Activated CD8-positive, alpha-beta T cell treated with anti-CD3 and anti-CD28 coated beads for 36 hours (primary cell): ENCODE measurements at regions of chr16 and their contacts with region 1.

Region 1: DNA sequence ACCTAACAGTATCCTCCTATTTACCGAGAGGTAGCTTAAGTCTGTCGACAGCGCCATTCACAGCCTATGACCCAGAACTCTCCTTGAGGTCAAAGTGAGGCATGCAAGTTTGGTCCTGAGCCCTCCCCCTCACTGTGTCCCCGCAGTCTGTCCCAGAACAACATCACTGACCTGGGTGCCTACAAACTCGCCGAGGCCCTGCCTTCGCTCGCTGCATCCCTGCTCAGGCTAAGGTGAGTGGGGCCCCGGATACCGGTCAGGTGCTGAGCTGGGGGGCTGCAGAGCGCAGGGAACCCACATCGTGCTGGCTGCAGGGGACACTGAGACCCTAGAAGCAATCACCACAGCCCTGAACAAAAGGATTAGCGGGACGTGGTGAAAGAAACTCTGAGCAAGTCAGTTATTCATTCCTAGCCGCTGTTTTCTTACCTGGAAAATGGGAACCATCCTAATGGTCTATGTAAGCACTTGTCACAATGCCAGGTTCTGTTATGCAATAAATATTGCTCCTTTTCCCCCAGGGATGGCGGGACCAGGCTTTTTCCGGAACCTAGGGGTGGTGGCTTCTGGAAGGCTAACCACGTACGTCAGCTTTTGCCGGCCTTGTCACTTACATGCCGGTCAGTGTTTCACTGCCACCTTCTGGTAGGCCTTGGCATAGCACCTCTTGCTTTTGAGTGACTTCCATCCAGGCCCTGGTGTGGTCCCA is 23.8 kb downstream of the DEXI start:
- DNase-seq: peak; percentile 96
- ATAC-seq: peak; percentile 87
- H3K4me3 Mint-ChIP-seq: no peak overlapping the region
- H3K27ac Mint-ChIP-seq: no peak overlapping the region
- H3K4me1 Mint-ChIP-seq: peaks cover 10% of the 10 kb centered on the region
- H3K27me3 Mint-ChIP-seq: no peaks in the 10 kb centered on the region
- CTCF ChIP-seq: peak; percentile 90

Region 2: GRCh38 chr16:10509534-10510025 is 408.9 kb before region 1 on chr16:
- CTCF ChIA-PET with region 1: interaction called, 19 read pairs
- POLR2A ChIA-PET with region 1: interaction called, 3 read pairs
- intact Hi-C with region 1: no loop called
- DNase-seq: peak; percentile 61
- ATAC-seq: peak; percentile 91
- H3K4me3 Mint-ChIP-seq: no peak overlapping the region
- H3K27ac Mint-ChIP-seq: no peak overlapping the region
- H3K4me1 Mint-ChIP-seq: peaks cover 14% of the 10 kb centered on the region
- H3K27me3 Mint-ChIP-seq: peaks cover 2% of the 10 kb centered on the region
- CTCF ChIP-seq: peak; percentile 83

Region 3: DNA sequence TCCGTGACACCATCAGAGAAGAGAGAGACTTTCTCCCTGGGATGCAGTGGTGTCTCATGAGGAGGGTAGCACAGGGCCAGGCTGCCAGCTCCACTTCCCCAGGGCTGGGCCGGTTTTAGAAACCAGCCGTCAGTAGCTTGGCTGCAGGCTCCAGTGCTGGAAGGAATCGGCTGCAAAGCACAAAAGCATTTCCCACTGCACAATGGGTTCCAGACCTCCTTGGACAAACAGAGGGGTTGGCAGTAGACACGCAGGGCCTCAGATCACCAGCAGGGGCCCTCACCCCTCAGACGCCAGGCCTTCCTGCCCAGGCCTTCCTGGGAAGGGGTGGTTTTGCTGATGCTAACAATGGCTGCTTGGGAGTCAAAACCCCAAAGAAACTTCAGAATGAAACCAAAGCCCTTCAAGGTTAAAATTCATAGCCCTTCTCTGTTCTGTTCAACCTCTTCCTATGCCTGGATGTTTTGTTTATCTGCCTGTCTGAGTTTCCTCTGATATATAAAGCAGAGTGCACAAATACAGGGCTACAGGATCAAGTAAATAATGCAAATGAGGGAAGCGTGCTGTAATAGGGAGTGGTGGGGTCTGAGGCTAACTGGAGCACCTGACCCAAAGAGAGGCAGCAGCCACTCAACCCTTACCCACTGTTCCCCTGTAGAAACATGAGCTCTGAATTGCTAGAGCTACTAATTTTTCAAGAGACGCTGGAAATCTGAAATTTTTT is 250.0 kb before region 1 on chr16:
- CTCF ChIA-PET with region 1: interaction called, 12 read pairs
- POLR2A ChIA-PET with region 1: no interaction called
- intact Hi-C with region 1: no loop called
- DNase-seq: peak; percentile 19
- ATAC-seq: no peak
- H3K4me3 Mint-ChIP-seq: no peak overlapping the region
- H3K27ac Mint-ChIP-seq: no peak overlapping the region
- H3K4me1 Mint-ChIP-seq: no peaks in the 10 kb centered on the region
- H3K27me3 Mint-ChIP-seq: no peaks in the 10 kb centered on the region
- CTCF ChIP-seq: peak; percentile 60

Region 4: GRCh38 chr16:10743610-10744393 is 174.6 kb before region 1 on chr16 and contains the start of gene NUBP1:
- CTCF ChIA-PET with region 1: interaction called, 20 read pairs
- POLR2A ChIA-PET with region 1: no interaction called
- intact Hi-C with region 1: loop called (anchors 5 kb)
- DNase-seq: peak; percentile 100
- ATAC-seq: peak; percentile 96
- H3K4me3 Mint-ChIP-seq: peak within 1 kb of the TSS; percentile 76
- H3K27ac Mint-ChIP-seq: peak within 1 kb of the TSS; percentile 98
- H3K4me1 Mint-ChIP-seq: peaks cover 33% of the 10 kb centered on the region
- H3K27me3 Mint-ChIP-seq: no peaks in the 10 kb centered on the region
- CTCF ChIP-seq: no peak
- total RNA-seq, gene NUBP1: 22.8 to 23.1 TPM

Region 5: DNA sequence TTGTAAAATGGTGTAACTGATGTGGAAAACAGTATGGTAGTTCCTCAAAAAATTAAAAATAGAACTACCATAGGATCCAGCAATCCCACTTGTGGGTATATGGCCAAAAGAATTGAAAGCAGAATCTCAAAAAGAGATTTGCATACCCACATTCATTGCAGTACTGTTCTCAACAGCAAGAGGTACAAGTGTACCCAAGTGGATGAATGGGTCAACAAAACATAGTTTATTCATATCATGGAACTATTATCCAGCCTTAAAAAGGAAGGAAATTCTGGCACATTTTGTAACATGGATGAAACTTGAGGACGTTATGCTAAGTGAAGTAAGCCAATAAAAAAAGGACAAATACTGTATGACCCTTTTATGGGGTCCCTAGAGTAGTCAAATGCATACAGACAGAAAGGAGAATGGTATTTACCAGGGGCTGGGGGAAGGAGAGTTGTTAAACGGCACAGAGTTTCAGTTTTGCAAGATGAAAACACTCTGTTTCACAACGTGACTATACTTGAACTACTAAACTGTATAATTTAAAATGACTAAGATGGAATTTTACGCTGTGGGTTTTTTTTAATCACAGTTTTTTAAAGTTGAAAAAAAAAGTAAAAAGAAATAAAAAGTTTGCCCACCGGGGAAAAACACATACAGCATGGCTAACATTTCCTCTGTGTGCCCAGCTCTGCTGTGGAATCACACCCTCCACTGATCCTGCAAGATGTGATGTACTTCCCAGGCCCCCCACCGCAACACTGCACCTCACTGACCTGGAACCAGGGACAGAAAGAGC is 105.9 kb before region 1 on chr16:
- CTCF ChIA-PET with region 1: no interaction called
- POLR2A ChIA-PET with region 1: no interaction called
- intact Hi-C with region 1: loop called (anchors 10 kb)
- DNase-seq: peak; percentile 13
- ATAC-seq: peak; percentile 92
- H3K4me3 Mint-ChIP-seq: no peak overlapping the region
- H3K27ac Mint-ChIP-seq: peak overlapping the region; percentile 7
- H3K4me1 Mint-ChIP-seq: peaks cover 9% of the 10 kb centered on the region
- H3K27me3 Mint-ChIP-seq: peaks cover under 1% of the 10 kb centered on the region
- CTCF ChIP-seq: no peak

Region 6: GRCh38 chr16:10851512-10851911 is 66.9 kb before region 1 on chr16:
- CTCF ChIA-PET with region 1: no interaction called
- POLR2A ChIA-PET with region 1: no interaction called
- intact Hi-C with region 1: no loop called
- DNase-seq: no peak
- ATAC-seq: no peak
- H3K4me3 Mint-ChIP-seq: no peak overlapping the region
- H3K27ac Mint-ChIP-seq: no peak overlapping the region
- H3K4me1 Mint-ChIP-seq: peaks cover 11% of the 10 kb centered on the region
- H3K27me3 Mint-ChIP-seq: peaks cover 8% of the 10 kb centered on the region
- CTCF ChIP-seq: no peak

Region 7: DNA sequence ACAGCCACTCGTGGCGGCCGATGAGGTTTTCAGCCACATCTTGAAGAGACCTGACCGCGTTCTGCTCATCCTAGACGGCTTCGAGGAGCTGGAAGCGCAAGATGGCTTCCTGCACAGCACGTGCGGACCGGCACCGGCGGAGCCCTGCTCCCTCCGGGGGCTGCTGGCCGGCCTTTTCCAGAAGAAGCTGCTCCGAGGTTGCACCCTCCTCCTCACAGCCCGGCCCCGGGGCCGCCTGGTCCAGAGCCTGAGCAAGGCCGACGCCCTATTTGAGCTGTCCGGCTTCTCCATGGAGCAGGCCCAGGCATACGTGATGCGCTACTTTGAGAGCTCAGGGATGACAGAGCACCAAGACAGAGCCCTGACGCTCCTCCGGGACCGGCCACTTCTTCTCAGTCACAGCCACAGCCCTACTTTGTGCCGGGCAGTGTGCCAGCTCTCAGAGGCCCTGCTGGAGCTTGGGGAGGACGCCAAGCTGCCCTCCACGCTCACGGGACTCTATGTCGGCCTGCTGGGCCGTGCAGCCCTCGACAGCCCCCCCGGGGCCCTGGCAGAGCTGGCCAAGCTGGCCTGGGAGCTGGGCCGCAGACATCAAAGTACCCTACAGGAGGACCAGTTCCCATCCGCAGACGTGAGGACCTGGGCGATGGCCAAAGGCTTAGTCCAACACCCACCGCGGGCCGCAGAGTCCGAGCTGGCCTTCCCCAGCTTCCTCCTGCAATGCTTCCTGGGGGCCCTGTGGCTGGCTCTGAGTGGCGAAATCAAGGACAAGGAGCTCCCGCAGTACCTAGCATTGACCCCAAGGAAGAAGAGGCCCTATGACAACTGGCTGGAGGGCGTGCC is 11.3 kb before region 1 on chr16:
- CTCF ChIA-PET with region 1: interaction called, 12 read pairs
- POLR2A ChIA-PET with region 1: no interaction called
- intact Hi-C with region 1: no loop called
- DNase-seq: no peak
- ATAC-seq: no peak
- H3K4me3 Mint-ChIP-seq: no peak overlapping the region
- H3K27ac Mint-ChIP-seq: no peak overlapping the region
- H3K4me1 Mint-ChIP-seq: no peaks in the 10 kb centered on the region
- H3K27me3 Mint-ChIP-seq: no peaks in the 10 kb centered on the region
- CTCF ChIP-seq: no peak